ENCODE measurements at regions of chr2 and their contacts with region 1.

Region 1: GRCh38 chr2:238097998-238098871 is 1.9 kb upstream of the ESPNL start:
- DNase-seq: peak; percentile 90
- ATAC-seq: peak; percentile 98
- H3K4me3 ChIP-seq: no peak overlapping the region
- H3K27ac ChIP-seq: peak overlapping the region; percentile 69
- H3K4me1 ChIP-seq: peaks cover 6 to 15% of the 10 kb centered on the region in 2 experiments; a peak in 3 of 4 replicates
- H3K27me3 ChIP-seq: no peaks in the 10 kb centered on the region
- CTCF ChIP-seq: no peak
- POLR2A ChIP-seq: no peak
- RAD21 ChIP-seq: no peak

Region 2: GRCh38 chr2:237923481-237924163 is 174.6 kb before region 1 on chr2:
- CTCF ChIA-PET with region 1: no interaction called
- POLR2A ChIA-PET with region 1: interaction called, 5 read pairs
- RAD21 ChIA-PET with region 1: no interaction called
- intact Hi-C with region 1: loop called (anchors 2 kb)
- DNase-seq: peak; percentile 29
- ATAC-seq: peak; percentile 91
- H3K4me3 ChIP-seq: peak overlapping the region; percentile 35 to 45
- H3K27ac ChIP-seq: peak overlapping the region; percentile 51; the same call in 1 of the 2 replicates
- H3K4me1 ChIP-seq: peaks cover 13 to 23% of the 10 kb centered on the region in 2 experiments
- H3K27me3 ChIP-seq: no peaks in the 10 kb centered on the region
- CTCF ChIP-seq: peak; percentile 69 to 99 (median 93)
- POLR2A ChIP-seq: no peak
- RAD21 ChIP-seq: peak; percentile 73

Region 3: DNA sequence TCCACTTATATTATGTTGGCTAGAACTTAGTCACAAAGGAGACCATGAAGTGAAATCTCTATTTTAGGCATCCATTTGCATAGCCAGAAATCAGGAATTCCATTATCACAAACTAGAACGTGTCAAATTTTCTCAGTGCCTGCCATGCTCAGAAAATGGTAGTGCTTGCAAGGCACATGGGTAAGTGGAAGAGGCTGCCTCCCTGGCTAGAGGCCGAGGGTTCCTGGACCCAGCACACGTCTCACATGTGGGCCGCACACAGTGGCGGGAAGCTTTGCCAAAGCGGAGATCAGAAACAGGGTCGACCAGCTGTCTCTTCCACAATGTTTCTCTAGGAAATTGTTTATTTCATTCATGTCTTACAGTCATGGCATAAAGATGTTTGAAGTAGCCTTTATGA is 264.4 kb after region 1 on chr2:
- CTCF ChIA-PET with region 1: no interaction called
- POLR2A ChIA-PET with region 1: no interaction called
- RAD21 ChIA-PET with region 1: no interaction called
- intact Hi-C with region 1: no loop called
- DNase-seq: no peak
- ATAC-seq: no peak
- H3K4me3 ChIP-seq: no peak overlapping the region
- H3K27ac ChIP-seq: no peak overlapping the region
- H3K4me1 ChIP-seq: 0 out of 4 replicates have a peak, but pooled peaks cover 0 to 2% of the 10 kb centered on the region in 2 experiments
- H3K27me3 ChIP-seq: no peaks in the 10 kb centered on the region
- CTCF ChIP-seq: no peak
- POLR2A ChIP-seq: no peak
- RAD21 ChIP-seq: no peak